Kidney (tissue), 22 donors: ENCODE measurements at regions of chr14 and their contacts with region 1.

Region 1: DNA sequence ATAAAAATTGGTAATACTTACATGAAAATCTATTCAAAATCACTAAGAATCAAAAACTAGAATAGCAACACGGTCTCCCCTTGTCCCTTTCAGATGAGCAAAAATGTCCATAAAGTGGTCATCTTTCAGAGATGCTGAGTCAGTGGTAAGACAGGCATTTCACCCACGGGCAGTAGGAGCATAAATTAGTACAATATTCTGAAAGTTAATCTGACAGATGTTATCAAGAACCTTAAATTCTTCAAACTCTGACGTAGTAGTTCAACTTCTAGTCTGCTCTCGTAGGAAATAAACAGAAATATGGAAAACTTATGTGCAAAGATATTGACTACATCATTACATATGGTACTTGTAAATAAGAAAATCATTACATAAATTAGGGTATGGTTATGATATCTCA is 33.1 kb upstream of the GNPNAT1 start:
- DNase-seq: no peak
- H3K4me3 ChIP-seq: no peak overlapping the region
- H3K27ac ChIP-seq: no peak overlapping the region
- H3K4me1 ChIP-seq: peaks cover 0 to 5% (median 0%) of the 10 kb centered on the region in 3 donors
- H3K27me3 ChIP-seq: no peaks in the 10 kb centered on the region
- CTCF ChIP-seq: no peak

Region 2: GRCh38 chr14:52961060-52961639 is 136.6 kb after region 1 on chr14:
- intact Hi-C with region 1: loop called (anchors 10 kb)
- DNase-seq: peak in 3 of 5 donors; percentile 49 to 73 (median 61)
- H3K4me3 ChIP-seq: no peak overlapping the region
- H3K27ac ChIP-seq: peak overlapping the region; percentile 44 to 59
- H3K4me1 ChIP-seq: peaks cover 0 to 4% (median 2%) of the 10 kb centered on the region in 3 donors
- H3K27me3 ChIP-seq: no peaks in the 10 kb centered on the region
- CTCF ChIP-seq: peak; percentile 86

Region 3: GRCh38 chr14:53055003-53055402 is 230.5 kb after region 1 on chr14:
- intact Hi-C with region 1: loop called (anchors 10 kb)
- DNase-seq: peak in 2 of 5 donors; percentile 67 to 75
- H3K4me3 ChIP-seq: no peak overlapping the region
- H3K27ac ChIP-seq: no peak overlapping the region
- H3K4me1 ChIP-seq: no peaks in the 10 kb centered on the region
- H3K27me3 ChIP-seq: no peaks in the 10 kb centered on the region
- CTCF ChIP-seq: peak; percentile 70

Region 4: GRCh38 chr14:53316499-53316898 is 492.0 kb after region 1 on chr14:
- intact Hi-C with region 1: no loop called
- DNase-seq: no peak
- H3K4me3 ChIP-seq: no peak overlapping the region
- H3K27ac ChIP-seq: no peak overlapping the region
- H3K4me1 ChIP-seq: no peaks in the 10 kb centered on the region
- H3K27me3 ChIP-seq: no peaks in the 10 kb centered on the region
- CTCF ChIP-seq: no peak